Activated T-helper 2 cell treated with anti-CD3 and anti-CD28 coated beads, Interferon-gamma antibody, Interleukin-2, Interleukin-4, amounts not matched to agents 10 μg/mL and 5 μg/mL and 100 μg/mL, durations not matched to agents 14 hours and 24 hours and 36 hours (primary cell): ENCODE measurements at regions of chr16 and their contacts with region 1.

Region 1: GRCh38 chr16:19886073-19886941 is 1.7 kb upstream of the GPRC5B start:
- DNase-seq: peak; percentile 74
- H3K4me3 Mint-ChIP-seq: peak overlapping the region; percentile 54
- H3K27ac Mint-ChIP-seq: no peak overlapping the region
- H3K4me1 Mint-ChIP-seq: peaks cover 23% of the 10 kb centered on the region
- H3K27me3 Mint-ChIP-seq: peaks cover 38% of the 10 kb centered on the region

Region 2: GRCh38 chr16:19555162-19555937 is 331.0 kb before region 1 on chr16 and contains the start of gene VPS35L:
- intact Hi-C with region 1: loop called (anchors 1 kb)
- DNase-seq: peak; percentile 95
- H3K4me3 Mint-ChIP-seq: peak within 1 kb of the TSS; percentile 91
- H3K27ac Mint-ChIP-seq: peak within 1 kb of the TSS; percentile 88
- H3K4me1 Mint-ChIP-seq: peaks cover 14% of the 10 kb centered on the region
- H3K27me3 Mint-ChIP-seq: no peaks in the 10 kb centered on the region
- total RNA-seq, gene VPS35L: 44.3 and 45.7 TPM in 2 replicates

Region 3: DNA sequence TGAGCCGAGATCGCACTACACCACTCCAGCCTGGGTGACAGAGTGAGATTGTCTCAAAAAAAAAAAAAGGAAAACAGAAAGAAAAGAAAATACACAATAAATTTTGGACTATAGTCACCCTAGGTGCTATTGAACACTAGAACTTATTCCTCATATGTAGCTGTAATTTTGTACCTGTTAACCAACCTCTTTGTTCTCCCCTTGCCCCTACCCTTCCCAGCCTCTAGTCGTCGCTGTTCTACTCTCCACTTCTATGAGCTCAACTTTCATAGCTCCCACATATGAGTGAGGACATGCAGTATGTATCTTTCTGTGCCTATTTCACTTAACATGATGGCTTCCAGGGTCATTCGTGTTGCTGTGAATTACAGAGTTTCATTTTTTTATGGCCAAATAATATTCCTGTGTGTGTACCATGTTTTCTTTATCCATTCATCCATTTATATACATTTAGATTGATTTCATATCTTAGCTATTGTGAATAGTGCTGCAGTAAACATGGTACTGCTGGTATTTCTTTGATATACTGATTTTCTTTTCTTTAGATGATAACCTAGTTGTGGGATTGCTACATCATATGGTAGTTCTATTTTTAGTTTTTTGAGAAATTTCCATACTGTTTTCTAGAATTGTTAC is 302.5 kb before region 1 on chr16:
- intact Hi-C with region 1: loop called (anchors 1 kb)
- DNase-seq: no peak
- H3K4me3 Mint-ChIP-seq: no peak overlapping the region
- H3K27ac Mint-ChIP-seq: no peak overlapping the region
- H3K4me1 Mint-ChIP-seq: peaks cover 2% of the 10 kb centered on the region
- H3K27me3 Mint-ChIP-seq: no peaks in the 10 kb centered on the region

Region 4: DNA sequence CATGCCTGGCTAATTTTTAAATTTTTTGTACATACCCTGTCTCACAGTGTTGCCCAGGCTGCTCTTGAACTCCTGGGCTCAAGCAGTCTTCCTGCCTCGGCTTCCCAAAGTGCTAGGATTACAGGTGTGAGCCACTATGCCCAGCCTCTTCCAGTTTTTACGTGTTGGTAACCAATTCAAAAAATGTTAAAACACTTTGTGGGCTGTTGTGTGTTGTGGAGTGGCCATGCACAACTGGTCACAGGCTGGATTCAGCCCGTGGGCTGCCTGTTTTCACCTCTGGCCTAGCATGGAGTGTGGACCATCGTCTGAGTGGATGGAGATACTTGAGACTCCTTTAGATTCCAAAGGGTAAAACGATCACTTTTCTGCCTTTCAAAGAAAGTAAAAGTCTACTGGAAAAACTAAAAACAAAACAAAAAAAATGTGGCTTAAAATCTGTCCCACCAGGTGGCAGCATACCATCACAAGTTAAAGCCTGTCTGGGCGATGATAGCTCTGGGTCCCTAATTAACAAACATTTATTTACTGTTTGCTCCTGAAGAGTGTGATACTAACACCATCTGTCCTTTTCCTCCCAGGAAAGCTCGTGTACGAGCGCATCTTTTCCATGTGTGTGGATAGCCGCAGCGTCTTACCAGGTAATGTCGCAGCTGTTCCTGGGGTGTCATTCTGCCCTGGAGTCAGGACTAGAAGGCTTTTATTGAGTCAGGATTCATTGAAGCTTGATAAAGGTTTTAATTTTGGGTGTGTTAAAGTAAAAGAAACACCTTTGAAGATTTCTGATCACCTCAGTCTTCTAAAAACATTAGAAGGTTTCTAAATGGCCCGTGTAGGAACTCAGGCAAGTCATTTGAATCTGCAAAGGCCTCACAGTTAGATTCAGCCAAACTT is 285.0 kb before region 1 on chr16:
- intact Hi-C with region 1: loop called (anchors 1 kb)
- DNase-seq: no peak
- H3K4me3 Mint-ChIP-seq: no peak overlapping the region
- H3K27ac Mint-ChIP-seq: no peak overlapping the region
- H3K4me1 Mint-ChIP-seq: peaks cover 2% of the 10 kb centered on the region
- H3K27me3 Mint-ChIP-seq: no peaks in the 10 kb centered on the region

Region 5: DNA sequence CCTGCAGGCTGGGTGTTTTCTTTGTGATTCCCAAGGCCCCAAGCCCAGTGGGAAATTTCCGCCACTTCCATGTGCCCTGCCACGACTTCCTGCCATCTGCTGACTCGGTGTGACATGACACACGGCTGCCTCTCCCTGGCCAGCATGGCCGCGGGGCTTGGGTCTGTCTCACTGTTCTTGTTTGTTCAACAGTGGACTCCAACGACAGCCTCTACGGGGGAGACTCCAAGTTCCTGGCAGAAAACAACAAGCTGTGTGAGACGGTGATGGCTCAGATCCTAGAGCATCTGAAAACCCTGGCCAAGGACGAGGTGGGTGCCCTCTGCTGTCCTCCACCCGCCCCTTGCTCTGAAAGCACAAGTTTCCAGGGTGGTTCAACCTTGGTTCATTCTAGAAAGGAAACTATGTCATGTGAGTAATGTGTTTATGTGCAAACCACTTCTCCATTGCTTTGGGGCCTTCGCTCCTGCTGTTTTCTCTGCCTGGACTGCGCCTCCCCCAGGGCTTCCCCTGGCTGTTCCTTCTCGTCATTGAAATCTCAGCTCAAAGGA is 195.1 kb before region 1 on chr16:
- intact Hi-C with region 1: no loop called
- DNase-seq: no peak
- H3K4me3 Mint-ChIP-seq: no peak overlapping the region
- H3K27ac Mint-ChIP-seq: no peak overlapping the region
- H3K4me1 Mint-ChIP-seq: peaks cover 16% of the 10 kb centered on the region
- H3K27me3 Mint-ChIP-seq: no peaks in the 10 kb centered on the region

Region 6: DNA sequence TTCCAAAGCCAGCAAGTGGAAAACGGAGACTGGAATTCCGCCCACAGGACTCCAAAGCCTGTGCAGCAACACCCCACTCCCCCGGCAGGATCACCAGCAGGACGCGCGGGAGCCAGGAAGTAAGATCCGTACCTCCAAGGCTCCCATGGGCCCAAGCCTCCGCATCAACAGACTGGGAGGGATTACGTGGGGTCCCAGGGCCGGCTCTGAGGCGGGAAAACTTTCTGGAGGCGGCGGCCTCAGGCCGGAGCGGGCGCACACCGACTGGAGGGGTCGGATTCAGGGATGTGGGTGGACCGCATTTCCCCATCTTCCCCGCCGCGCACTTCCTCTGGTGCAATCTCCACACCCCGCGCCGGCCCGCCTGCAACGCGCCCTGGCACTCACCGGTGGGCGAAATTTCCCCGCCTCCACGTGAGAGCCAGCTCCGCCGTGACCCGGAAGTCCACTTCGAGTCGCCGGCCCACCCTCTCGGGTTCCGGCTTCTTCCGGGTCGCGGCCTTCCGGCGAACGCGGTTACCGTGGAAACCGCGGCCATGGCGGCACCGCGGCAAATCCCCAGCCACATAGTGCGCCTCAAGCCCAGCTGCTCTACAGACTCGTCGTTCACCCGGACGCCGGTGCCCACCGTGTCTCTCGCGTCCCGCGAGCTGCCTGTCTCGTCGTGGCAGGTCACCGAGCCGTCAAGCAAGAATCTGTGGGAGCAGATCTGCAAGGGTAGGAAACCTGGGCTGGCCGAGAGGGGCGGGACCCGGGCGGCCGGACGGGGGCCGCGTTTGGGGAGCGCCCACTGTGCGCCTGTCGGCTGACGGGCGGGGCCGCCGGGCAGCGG is 168.3 kb before region 1 on chr16 and contains the starts of genes IQCK and KNOP1:
- intact Hi-C with region 1: loop called (anchors 5 kb)
- DNase-seq: peak; percentile 85
- H3K4me3 Mint-ChIP-seq: peak within 1 kb of the TSS; percentile 93
- H3K27ac Mint-ChIP-seq: peak within 1 kb of the TSS; percentile 83
- H3K4me1 Mint-ChIP-seq: peaks cover 10% of the 10 kb centered on the region
- H3K27me3 Mint-ChIP-seq: no peaks in the 10 kb centered on the region
- total RNA-seq, gene IQCK: 0.89 and 1.0 TPM in 2 replicates
- total RNA-seq, gene KNOP1: 29.2 and 30.1 TPM in 2 replicates

Region 7: GRCh38 chr16:19844945-19845641 is 41.2 kb before region 1 on chr16:
- intact Hi-C with region 1: no loop called
- DNase-seq: no peak
- H3K4me3 Mint-ChIP-seq: no peak overlapping the region
- H3K27ac Mint-ChIP-seq: no peak overlapping the region
- H3K4me1 Mint-ChIP-seq: no peaks in the 10 kb centered on the region
- H3K27me3 Mint-ChIP-seq: no peaks in the 10 kb centered on the region

Region 8: GRCh38 chr16:19907161-19907992 is 21.1 kb after region 1 on chr16:
- intact Hi-C with region 1: no loop called
- DNase-seq: peak; percentile 61
- H3K4me3 Mint-ChIP-seq: no peak overlapping the region
- H3K27ac Mint-ChIP-seq: no peak overlapping the region
- H3K4me1 Mint-ChIP-seq: peaks cover 7% of the 10 kb centered on the region
- H3K27me3 Mint-ChIP-seq: peaks cover 5% of the 10 kb centered on the region